GM10248 (cell line): ENCODE measurements at regions of chr12 and their contacts with region 1.

Region 1: GRCh38 chr12:64256166-64256800 is 34.2 kb upstream of the KICS2 start:
- DNase-seq: peak; percentile 33
- CTCF ChIP-seq: peak; percentile 48

Region 2: DNA sequence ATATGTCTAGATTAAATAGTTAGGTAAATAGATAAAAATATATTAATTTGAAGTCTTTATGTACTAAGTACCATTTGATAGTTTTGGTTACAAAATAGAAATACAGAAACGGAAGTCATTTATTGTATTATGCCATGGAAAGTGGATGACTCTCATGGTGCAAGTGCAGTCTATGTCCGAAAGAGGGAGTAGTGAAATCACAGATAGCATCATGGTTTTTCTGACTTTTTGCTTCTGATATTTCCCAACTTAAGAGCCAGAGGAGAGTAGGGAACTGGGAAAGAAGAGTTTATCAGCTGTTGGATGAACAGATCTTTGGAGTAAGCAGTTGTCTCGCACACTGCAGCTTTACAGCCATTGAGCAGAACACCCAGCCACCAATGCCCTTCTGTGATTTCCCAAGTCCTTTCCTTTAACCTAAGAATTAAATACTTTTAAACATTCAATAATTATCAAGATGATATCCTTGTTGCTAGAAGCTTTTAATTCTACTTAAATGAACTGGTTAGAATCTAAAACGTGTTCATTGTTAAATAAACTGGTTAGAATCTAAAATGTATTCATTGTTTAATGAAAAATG is 430.2 kb before region 1 on chr12:
- CTCF ChIA-PET with region 1: interaction called, 21 read pairs
- POLR2A ChIA-PET with region 1: no interaction called
- DNase-seq: peak; percentile 48
- CTCF ChIP-seq: peak; percentile 76

Region 3: DNA sequence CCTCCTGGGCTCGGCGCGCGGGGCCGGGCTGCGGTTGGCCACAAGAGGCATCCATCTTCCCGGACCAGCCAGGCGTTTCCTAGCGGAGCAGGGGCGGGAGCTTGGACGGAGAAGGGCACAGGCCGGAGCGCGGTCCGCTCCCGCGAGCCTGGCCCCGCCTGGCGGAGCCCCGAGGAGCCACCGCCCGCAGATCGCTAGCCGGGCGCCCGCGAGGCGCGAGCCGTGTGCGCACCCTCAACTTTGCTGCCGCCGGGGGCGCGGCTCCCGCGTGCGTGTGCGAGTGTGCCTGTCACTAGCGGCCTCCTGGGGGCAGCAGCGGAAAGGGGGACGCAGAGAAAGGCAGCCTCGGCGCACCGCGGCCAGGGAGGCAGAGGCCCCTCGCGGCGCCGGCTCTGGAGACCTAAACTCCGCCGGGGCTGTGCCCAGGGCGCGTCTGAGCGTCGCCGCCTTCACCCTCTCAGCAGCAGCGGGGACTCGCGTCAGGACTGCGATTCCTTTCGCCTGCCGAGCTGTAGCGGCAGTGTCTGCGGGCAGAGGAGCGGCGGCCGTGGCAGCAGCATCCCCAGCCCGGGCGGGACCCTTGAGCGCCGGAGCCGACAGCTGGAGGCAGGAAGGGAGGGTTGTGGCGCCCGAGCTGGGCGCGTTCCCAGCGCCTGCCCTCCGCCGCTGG is 412.4 kb before region 1 on chr12:
- CTCF ChIA-PET with region 1: interaction called, 34 read pairs
- POLR2A ChIA-PET with region 1: no interaction called
- DNase-seq: peak; percentile 90
- CTCF ChIP-seq: peak; percentile 96

Region 4: GRCh38 chr12:63917864-63918799 is 338.2 kb before region 1 on chr12:
- CTCF ChIA-PET with region 1: no interaction called
- POLR2A ChIA-PET with region 1: no interaction called
- DNase-seq: no peak
- CTCF ChIP-seq: no peak

Region 5: DNA sequence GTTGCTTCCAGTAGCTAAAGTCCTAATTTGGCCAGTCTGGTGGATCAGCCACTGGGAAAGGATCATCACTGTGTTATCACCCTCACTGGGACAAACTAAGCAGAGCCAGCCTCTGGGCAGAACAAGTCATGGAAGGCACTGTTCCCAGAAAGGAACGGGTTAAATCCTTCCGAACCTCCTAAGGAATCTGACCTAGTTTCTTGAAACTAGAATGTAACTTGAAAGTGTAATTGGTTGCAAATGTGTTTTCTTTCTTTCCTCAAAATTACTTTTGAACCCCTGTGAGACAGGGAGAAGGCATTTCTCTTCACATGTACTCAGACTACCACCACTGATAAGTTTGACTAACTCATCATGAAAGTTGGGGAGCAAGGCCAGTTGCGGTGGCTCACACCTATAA is 15.5 kb before region 1 on chr12:
- CTCF ChIA-PET with region 1: interaction called, 16 read pairs
- POLR2A ChIA-PET with region 1: no interaction called
- DNase-seq: no peak
- CTCF ChIP-seq: no peak

Region 6: GRCh38 chr12:64270411-64270810 is 14.1 kb after region 1 on chr12:
- CTCF ChIA-PET with region 1: interaction called, 14 read pairs
- POLR2A ChIA-PET with region 1: interaction called, 3 read pairs
- DNase-seq: no peak
- CTCF ChIP-seq: no peak

Region 7: DNA sequence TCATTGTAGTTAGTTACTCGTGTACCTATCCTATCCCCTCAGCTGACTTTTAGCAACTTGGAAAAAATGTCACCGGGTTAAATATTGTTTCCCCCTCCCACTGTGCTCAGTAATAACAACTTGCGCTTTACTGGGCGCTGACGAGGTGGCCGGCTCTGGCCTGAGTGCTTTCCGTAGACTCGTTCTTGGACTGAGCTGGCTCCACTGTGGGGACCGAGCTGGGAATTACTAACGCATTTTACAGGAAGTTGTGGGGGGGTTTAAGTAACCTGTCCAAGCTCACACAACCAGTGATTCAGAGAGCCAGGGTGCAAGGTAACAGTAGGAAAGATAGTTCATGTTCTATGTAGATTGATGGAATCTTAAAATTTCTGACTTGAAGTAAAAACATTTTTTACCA is 48.3 kb after region 1 on chr12:
- CTCF ChIA-PET with region 1: no interaction called
- POLR2A ChIA-PET with region 1: no interaction called
- DNase-seq: no peak
- CTCF ChIP-seq: no peak